Activated CD4-positive, alpha-beta T cell treated with anti-CD3 and anti-CD28 coated beads for 36 hours (primary cell): ENCODE measurements at regions of chr11 and their contacts with region 1.

Region 1: GRCh38 chr11:116605543-116606459 is 167.0 kb downstream of the BUD13 start:
- DNase-seq: peak; percentile 67
- ATAC-seq: no peak
- H3K4me3 Mint-ChIP-seq: no peak overlapping the region
- H3K27ac Mint-ChIP-seq: no peak overlapping the region
- H3K4me1 Mint-ChIP-seq: no peaks in the 10 kb centered on the region
- H3K27me3 Mint-ChIP-seq: peaks cover 5% of the 10 kb centered on the region

Region 2: GRCh38 chr11:116379185-116379828 is 226.5 kb before region 1 on chr11:
- CTCF ChIA-PET with region 1: no interaction called
- POLR2A ChIA-PET with region 1: no interaction called
- intact Hi-C with region 1: loop called in 1 of 2 experiments (anchors 5 kb)
- DNase-seq: peak; percentile 37
- ATAC-seq: no peak
- H3K4me3 Mint-ChIP-seq: no peak overlapping the region
- H3K27ac Mint-ChIP-seq: no peak overlapping the region
- H3K4me1 Mint-ChIP-seq: no peaks in the 10 kb centered on the region
- H3K27me3 Mint-ChIP-seq: peaks cover 13% of the 10 kb centered on the region

Region 3: DNA sequence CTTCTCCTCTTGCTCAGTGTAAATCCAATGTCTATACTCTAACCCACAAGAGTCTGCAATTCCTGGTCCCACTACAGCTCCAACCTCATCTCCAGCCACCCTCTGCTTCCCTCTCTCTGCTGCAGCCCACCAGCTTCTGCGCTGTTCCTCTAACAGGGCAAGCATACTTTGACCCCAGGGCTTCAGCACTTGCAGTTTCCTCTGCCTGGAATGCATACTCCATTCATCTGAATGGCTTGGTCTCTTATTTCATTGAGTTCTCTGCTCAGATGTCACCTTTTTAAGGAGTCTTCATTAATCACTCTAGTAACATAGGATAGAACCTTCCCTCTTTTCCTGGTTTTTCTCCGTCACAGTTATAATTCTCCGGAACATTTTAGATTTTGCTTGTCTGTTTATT is 25.4 kb after region 1 on chr11:
- CTCF ChIA-PET with region 1: no interaction called
- POLR2A ChIA-PET with region 1: no interaction called
- intact Hi-C with region 1: no loop called
- DNase-seq: no peak
- ATAC-seq: no peak
- H3K4me3 Mint-ChIP-seq: no peak overlapping the region
- H3K27ac Mint-ChIP-seq: no peak overlapping the region
- H3K4me1 Mint-ChIP-seq: no peaks in the 10 kb centered on the region
- H3K27me3 Mint-ChIP-seq: peaks cover 7% of the 10 kb centered on the region

Region 4: GRCh38 chr11:116750070-116750718 is 144.4 kb after region 1 on chr11:
- CTCF ChIA-PET with region 1: no interaction called
- POLR2A ChIA-PET with region 1: no interaction called
- intact Hi-C with region 1: no loop called
- DNase-seq: no peak
- ATAC-seq: no peak
- H3K4me3 Mint-ChIP-seq: no peak overlapping the region
- H3K27ac Mint-ChIP-seq: no peak overlapping the region
- H3K4me1 Mint-ChIP-seq: no peaks in the 10 kb centered on the region
- H3K27me3 Mint-ChIP-seq: no peaks in the 10 kb centered on the region